Mammary epithelial cell (primary cell): ENCODE measurements at regions of chr19 and their contacts with region 1.

Region 1: DNA sequence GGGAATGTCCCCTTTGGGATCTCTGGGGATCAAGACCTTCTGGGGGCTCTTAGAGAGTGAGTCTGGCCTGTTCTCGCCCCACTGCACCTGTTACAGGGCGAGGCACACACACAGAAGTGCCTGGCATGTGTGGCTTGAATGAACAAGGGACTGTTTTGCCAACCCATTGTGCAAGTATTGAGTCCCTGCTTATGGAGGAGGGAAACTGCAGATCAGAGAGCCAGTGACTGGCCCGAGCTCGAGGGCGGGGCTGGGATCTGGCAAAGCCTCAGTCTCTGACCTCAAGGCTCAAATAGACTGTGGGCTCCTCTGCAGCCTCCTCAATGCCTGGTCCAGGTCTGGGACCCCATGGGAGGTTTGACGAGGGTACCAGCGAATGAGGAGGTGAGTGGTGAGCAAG is 5.5 kb downstream of the RAVER1 start:
- DNase-seq: no peak
- H3K4me3 ChIP-seq: no peak overlapping the region
- H3K27ac ChIP-seq: no peak overlapping the region
- H3K4me1 ChIP-seq: peaks cover 5% of the 10 kb centered on the region
- H3K27me3 ChIP-seq: no peaks in the 10 kb centered on the region
- CTCF ChIP-seq: no peak

Region 2: DNA sequence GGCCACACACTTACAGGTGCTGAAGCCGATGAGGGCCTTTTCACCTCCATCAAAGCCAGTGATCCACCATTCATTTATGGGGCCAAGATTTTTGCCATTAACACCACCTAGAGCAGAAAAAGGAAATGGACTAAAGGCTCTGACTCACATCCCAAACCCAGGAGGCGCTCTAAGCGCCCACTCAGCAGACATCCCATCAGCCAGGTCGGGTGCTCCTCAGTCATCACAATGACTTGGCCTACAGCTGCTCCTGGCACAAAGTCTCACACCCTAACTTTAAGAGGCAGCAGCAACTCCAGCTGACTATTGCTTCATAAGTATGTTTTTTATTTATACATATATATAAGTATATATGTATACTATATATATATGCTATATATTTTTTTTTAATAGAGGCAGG is 172.0 kb before region 1 on chr19:
- CTCF ChIA-PET with region 1: no interaction called
- dilution Hi-C with region 1: no loop called
- in situ Hi-C with region 1: no loop called
- intact Hi-C with region 1: no loop called
- DNase-seq: peak; percentile 14
- H3K4me3 ChIP-seq: no peak overlapping the region
- H3K27ac ChIP-seq: no peak overlapping the region
- H3K4me1 ChIP-seq: no peaks in the 10 kb centered on the region
- H3K27me3 ChIP-seq: no peaks in the 10 kb centered on the region
- CTCF ChIP-seq: no peak

Region 3: GRCh38 chr19:10292206-10292788 is 35.5 kb before region 1 on chr19:
- CTCF ChIA-PET with region 1: no interaction called
- dilution Hi-C with region 1: loop called (anchors 5 kb)
- in situ Hi-C with region 1: no loop called
- intact Hi-C with region 1: loop called (anchors 2 kb)
- DNase-seq: peak; percentile 36
- H3K4me3 ChIP-seq: peak overlapping the region; percentile 45 to 51 (median 50)
- H3K27ac ChIP-seq: no peak overlapping the region
- H3K4me1 ChIP-seq: peaks cover 31% of the 10 kb centered on the region
- H3K27me3 ChIP-seq: no peaks in the 10 kb centered on the region
- CTCF ChIP-seq: no peak

Region 4: DNA sequence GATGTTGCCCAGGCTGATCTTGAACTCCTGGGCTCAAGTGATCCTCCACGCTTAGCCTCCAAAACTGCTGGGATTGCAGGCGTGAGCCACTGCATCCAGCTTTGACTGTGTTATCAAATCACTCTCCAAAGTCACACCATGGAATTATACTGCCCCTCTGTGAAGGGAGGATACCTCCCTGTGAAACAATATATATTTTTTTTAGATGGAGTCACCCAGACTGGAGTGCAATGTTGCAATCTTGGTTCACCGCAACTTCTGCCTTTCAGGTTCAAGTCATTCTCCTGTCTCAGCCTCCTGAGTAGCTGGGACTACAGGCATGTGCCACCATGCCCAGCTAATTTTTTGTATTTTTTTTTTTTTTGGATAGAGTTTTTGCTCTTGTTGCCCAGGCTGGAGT is 44.9 kb after region 1 on chr19:
- CTCF ChIA-PET with region 1: no interaction called
- dilution Hi-C with region 1: loop called (anchors 5 kb)
- in situ Hi-C with region 1: no loop called
- intact Hi-C with region 1: no loop called
- DNase-seq: no peak
- H3K4me3 ChIP-seq: no peak overlapping the region
- H3K27ac ChIP-seq: no peak overlapping the region
- H3K4me1 ChIP-seq: no peaks in the 10 kb centered on the region
- H3K27me3 ChIP-seq: no peaks in the 10 kb centered on the region
- CTCF ChIP-seq: no peak

Region 5: GRCh38 chr19:10403137-10404021 is 75.6 kb after region 1 on chr19 and contains the start of gene CDC37:
- CTCF ChIA-PET with region 1: no interaction called
- dilution Hi-C with region 1: no loop called
- in situ Hi-C with region 1: no loop called
- intact Hi-C with region 1: no loop called
- DNase-seq: peak; percentile 94
- H3K4me3 ChIP-seq: peak within 1 kb of the TSS; percentile 85 to 94 (median 92)
- H3K27ac ChIP-seq: peak within 1 kb of the TSS; percentile 84
- H3K4me1 ChIP-seq: peaks cover 24% of the 10 kb centered on the region
- H3K27me3 ChIP-seq: peaks cover 3% of the 10 kb centered on the region
- CTCF ChIP-seq: no peak
- total RNA-seq, gene CDC37: 114 to 217 TPM